Activated T-helper 2 cell treated with anti-CD3 and anti-CD28 coated beads, Interferon-gamma antibody, Interleukin-2, Interleukin-4, amounts not matched to agents 10 μg/mL and 5 μg/mL and 100 μg/mL, durations not matched to agents 14 hours and 24 hours and 36 hours (primary cell): ENCODE measurements at regions of chr6 and their contacts with region 1.

Region 1: DNA sequence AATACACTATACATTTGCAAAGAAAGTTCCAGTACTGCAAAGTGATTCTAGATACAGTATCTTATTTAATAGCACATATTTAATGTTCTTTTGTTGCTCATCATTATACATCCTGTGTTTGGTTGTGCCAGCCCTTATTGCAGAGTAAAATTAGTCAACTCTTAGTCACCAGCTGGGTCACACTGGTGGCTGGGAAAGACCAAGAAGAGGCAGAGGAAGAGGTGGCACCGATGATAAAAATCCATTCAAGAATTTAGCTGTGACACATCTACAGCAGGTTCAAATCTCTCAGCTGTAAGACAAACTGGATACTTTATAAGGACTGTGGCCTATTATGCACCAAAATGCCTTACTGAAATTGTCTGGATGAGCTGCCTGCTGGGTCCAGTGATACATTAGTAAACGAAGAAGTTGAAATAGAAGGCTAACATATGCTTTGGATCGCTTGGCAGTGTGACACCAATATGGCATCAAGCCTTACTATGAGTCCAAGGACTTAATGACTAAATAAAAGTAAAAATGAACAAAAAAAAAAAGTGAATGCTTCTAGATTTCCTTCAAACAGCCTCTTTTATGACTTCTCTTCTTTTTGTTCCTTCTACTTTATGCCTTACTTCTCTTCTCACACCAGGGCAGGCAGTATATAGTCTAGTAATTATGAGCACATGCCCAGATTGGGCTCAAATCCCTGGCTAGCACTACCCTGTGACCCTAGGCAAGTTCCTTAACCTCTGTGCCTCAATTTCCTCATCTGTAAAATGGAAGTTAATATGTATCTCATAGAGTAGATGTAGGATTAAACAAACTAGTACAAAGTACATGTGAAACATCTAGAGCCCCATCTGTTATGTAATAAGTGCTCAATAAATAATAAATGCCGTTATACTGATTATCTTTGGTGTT is 29.4 kb upstream of the RNF8 start:
- DNase-seq: no peak
- H3K4me3 Mint-ChIP-seq: no peak overlapping the region
- H3K27ac Mint-ChIP-seq: peak overlapping the region; percentile 12
- H3K4me1 Mint-ChIP-seq: peaks cover 13% of the 10 kb centered on the region
- H3K27me3 Mint-ChIP-seq: no peaks in the 10 kb centered on the region

Region 2: DNA sequence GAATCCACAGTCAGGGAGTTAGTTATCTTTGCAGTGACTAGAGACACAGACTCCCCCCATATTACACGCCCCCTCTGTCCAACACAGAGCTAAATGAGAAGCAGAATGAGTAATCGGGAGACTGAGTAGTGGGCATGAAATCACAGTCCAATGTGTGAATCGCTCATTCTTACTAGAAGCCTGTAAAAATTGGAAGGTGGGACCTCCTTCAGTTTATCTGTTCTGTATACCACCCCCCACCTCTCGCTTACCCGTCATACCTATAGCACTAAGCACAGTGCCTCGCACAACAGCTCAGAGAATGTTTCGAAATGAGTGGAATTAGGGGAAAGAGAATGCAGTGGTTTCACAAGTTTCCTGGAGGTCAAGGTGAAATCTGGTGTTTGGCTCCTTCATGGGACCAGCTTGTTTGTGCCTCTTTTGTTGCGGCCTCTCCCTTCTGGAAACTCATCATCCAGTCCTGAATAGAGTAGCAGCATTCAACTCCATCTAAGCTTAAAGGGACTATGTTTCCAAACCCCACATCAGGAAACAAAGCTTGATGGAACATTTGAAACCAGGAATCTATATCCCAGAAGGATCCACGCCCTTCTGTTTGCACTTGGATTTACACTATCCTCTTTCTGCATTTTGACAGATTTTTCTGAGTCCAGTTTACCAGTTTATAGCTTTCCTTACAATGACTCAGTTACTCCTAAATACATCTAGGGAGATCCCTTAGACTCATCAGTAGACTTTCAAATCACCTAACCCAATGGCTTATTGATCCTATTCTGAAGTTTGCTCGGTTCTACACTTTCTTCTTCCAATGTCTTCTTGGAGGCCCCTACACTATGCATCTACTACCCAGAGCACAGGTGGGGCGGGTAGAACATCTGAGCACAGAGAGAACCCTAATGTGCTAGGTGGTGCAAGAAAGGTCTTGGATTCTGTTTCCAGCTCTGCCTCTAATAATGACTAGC is 213.6 kb before region 1 on chr6:
- intact Hi-C with region 1: no loop called
- DNase-seq: no peak
- H3K4me3 Mint-ChIP-seq: no peak overlapping the region
- H3K27ac Mint-ChIP-seq: peak overlapping the region; percentile 40
- H3K4me1 Mint-ChIP-seq: peaks cover 13% of the 10 kb centered on the region
- H3K27me3 Mint-ChIP-seq: no peaks in the 10 kb centered on the region

Region 3: DNA sequence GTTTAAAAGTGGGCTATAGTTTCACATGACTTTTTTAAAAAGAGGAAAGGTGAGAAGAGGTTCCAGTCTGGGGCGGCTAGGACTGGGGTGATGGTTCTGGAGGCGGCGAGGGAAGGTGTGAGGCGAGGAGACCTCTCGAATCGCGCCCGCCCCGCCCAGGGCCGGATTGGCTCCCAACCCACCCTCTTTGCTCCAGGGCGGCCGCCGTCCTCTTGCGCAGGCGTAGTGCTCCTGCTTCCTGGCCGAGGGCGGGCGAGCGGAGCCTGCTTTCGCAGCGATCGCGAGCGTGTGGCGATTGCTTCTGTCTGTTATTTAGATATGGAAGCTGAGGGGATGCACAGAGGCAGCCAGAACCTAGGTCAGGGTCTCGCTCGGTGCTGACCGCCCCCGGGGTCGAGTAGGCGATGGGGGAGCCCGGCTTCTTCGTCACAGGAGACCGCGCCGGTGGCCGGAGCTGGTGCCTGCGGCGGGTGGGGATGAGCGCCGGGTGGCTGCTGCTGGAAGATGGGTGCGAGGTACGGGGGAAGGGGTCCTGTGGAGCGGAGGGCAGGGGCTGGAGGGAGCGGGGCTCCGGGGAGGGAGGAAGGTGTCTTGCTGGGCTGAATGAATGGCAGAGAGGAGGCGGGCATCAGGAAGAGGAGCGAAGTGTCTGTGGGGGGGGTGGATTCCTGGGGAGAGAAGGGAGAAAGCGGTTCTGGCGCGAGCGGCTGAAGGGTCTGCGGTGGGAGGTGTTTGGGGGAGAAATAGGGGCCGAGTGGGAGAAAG is 29.6 kb after region 1 on chr6 and contains the start of gene RNF8:
- intact Hi-C with region 1: loop called (anchors 2 kb)
- DNase-seq: peak; percentile 88
- H3K4me3 Mint-ChIP-seq: peak within 1 kb of the TSS; percentile 93
- H3K27ac Mint-ChIP-seq: peak within 1 kb of the TSS; percentile 84
- H3K4me1 Mint-ChIP-seq: peaks cover 22% of the 10 kb centered on the region
- H3K27me3 Mint-ChIP-seq: no peaks in the 10 kb centered on the region
- total RNA-seq, gene RNF8: 28.5 and 32.0 TPM in 2 replicates

Region 4: GRCh38 chr6:37365762-37366161 is 41.4 kb after region 1 on chr6:
- intact Hi-C with region 1: loop called (anchors 5 kb)
- DNase-seq: no peak
- H3K4me3 Mint-ChIP-seq: no peak overlapping the region
- H3K27ac Mint-ChIP-seq: no peak overlapping the region
- H3K4me1 Mint-ChIP-seq: peaks cover 10% of the 10 kb centered on the region
- H3K27me3 Mint-ChIP-seq: no peaks in the 10 kb centered on the region

Region 5: DNA sequence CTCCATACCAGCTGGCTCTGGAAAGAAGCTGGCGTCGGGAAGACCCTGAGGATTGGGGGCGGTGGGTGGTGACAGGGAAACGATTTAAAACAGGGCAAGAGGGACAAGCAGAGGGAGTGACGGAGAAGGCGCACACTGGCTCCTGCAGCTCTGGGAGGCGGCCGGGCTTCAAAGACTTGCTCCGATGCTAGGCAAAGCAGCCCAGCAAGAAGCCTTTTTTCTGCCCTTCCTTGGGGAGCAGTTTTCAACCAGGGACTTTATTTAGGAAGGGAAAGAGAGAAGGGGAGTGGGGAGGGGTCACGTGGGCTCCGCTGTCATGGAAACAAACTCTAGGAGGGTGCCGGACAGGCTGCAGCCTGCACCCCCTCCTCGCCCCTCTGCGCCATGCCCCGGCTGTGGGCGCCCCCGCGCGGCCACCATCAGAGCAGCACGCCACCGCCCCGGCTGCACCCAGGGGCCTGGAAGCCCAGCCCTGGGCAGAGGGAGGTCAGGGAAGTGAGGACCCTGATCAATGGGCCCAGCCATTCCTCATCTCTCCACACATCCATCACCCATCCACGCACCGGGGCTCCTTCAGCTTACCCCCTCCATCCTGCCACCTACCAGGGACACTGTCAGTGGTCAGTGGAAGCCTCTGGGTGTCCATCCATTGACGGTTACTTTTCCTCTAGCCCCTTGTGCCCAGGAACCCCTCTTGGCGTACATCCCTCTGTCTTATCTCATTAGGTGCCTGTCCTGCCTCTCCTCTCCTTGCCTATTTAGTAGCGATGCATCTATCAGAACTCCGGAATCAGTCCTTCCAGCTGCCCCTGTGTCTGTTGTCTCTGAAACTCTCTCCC is 241.9 kb after region 1 on chr6:
- intact Hi-C with region 1: loop called (anchors 2 kb)
- DNase-seq: peak; percentile 58
- H3K4me3 Mint-ChIP-seq: no peak overlapping the region
- H3K27ac Mint-ChIP-seq: no peak overlapping the region
- H3K4me1 Mint-ChIP-seq: no peaks in the 10 kb centered on the region
- H3K27me3 Mint-ChIP-seq: peaks cover 19% of the 10 kb centered on the region

Region 6: GRCh38 chr6:37643851-37644672 is 319.7 kb after region 1 on chr6:
- intact Hi-C with region 1: no loop called
- DNase-seq: peak; percentile 24
- H3K4me3 Mint-ChIP-seq: no peak overlapping the region
- H3K27ac Mint-ChIP-seq: peak overlapping the region; percentile 65
- H3K4me1 Mint-ChIP-seq: peaks cover 24% of the 10 kb centered on the region
- H3K27me3 Mint-ChIP-seq: peaks cover 15% of the 10 kb centered on the region

Region 7: DNA sequence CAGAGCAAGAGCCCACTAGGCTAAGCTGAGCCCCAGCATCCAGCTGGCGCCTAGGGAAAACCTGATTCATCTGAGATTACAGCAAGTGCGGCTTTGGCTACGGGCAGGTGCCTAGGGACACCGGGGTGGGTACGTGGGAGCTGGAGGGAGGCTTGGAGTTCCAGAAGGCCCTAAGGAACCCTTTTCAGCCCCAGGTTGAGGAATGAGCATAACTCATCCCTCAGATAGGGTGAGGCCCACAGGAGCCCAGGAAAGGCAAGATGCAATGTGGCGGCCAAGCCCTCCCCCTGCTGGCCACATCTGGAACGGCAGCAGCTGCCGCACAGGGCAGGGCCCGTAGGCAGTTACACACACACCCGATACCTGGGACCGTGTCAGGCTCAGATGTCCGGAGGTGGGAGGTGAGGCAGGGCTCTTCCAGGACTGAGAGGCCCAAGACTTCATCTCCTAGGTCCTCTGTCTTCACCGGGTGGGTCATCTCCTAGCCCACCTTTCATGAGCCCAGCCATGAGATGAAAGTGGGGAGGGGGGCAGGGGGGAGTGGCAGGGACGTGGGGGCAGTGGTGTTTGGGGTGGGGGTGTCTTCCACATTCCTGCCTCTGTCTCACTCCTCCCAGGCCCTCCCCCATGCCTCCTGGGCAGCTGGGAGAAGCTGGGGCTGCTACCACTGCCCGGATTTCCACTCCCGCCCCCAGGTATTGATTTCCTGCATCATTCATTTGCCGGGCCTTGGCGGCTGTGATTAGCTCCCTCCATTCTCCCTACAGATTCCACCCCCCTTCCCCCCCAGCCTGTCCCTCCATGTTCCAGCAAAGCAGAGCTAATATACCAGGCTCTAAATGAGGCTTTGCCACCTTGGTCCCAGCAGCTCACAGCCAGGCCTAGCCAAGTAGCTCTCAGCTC is 367.8 kb after region 1 on chr6:
- intact Hi-C with region 1: loop called (anchors 1 kb)
- DNase-seq: peak; percentile 64
- H3K4me3 Mint-ChIP-seq: no peak overlapping the region
- H3K27ac Mint-ChIP-seq: no peak overlapping the region
- H3K4me1 Mint-ChIP-seq: peaks cover 22% of the 10 kb centered on the region
- H3K27me3 Mint-ChIP-seq: peaks cover 45% of the 10 kb centered on the region